HepG2 (cell line): ENCODE measurements at regions of chr11 and their contacts with region 1.

Region 1: DNA sequence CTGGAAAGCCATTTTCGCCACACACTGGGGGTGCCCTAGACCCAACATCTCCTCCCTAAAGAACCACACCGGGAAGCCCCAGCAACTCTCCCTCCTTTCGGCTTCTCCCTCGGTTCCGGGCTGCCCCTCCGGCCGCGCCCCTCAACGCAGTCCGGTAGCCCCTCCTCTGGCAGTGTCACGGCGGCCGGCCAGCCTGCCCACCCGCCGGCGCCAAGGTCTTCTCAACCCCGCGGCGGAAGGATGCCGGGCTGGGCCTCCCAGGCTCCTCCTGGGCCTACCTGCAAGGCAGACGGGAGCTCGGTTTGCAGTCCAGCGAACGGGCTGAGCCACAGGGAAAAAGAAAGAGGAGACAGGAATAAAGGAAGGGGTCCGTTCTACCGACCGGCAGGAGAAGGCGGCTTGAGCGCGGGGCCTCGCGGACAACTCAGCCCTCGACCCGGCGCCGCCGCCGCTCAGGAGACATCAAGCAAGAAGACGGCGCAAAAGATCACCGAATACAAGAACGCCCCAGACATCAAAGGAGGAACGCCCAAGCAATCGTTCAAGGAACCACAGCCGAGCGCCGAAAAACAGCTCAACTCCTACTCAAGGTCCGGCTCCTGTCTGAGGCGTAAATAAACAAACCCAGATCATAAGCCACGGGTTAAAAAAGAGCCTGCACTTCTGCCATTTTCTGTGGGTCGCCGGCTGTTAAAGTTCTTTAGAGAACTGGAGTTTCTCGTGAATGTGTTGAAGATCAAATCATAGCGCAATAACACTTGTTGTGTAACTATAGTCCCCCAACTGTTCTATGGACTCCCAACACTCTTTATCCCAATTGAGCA is at the start of gene AMBRA1:
- DNase-seq: peak; percentile 95
- ATAC-seq: peak; percentile 74
- H3K4me3 ChIP-seq: peak within 1 kb of the TSS; percentile 73 to 97 (median 87)
- H3K27ac ChIP-seq: peak within 1 kb of the TSS; percentile 97
- H3K4me1 ChIP-seq: peaks cover 64% of the 10 kb centered on the region
- H3K27me3 ChIP-seq: peaks cover 0 to 4% of the 10 kb centered on the region in 2 experiments; a peak in 1 of 5 replicates
- CTCF ChIP-seq: 0 out of 2 replicates have a peak, but pooled peaks have one; percentile 2
- EP300 ChIP-seq: peak; percentile 26 to 49; a peak in 1 of 4 replicates
- POLR2A ChIP-seq: peak; percentile 62 to 71; a peak in 3 of 4 replicates
- RAD21 ChIP-seq: peak; percentile 29; the same call in 1 of the 2 replicates
- total RNA-seq, gene AMBRA1: 26.0 and 26.1 TPM in 2 replicates

Region 2: GRCh38 chr11:46554205-46555055 is 39.3 kb before region 1 on chr11:
- CTCF ChIA-PET with region 1: no interaction called
- POLR2A ChIA-PET with region 1: interaction called, 20 read pairs
- in situ Hi-C with region 1: no loop called
- intact Hi-C with region 1: loop called (anchors 1 kb)
- DNase-seq: peak; percentile 99
- ATAC-seq: peak; percentile 83
- H3K4me3 ChIP-seq: peak overlapping the region in 1 of 3 experiments; percentile 34; a peak in 1 of 6 replicates
- H3K27ac ChIP-seq: peak overlapping the region; percentile 91
- H3K4me1 ChIP-seq: peaks cover 65% of the 10 kb centered on the region
- H3K27me3 ChIP-seq: no peaks in the 10 kb centered on the region
- CTCF ChIP-seq: no peak
- EP300 ChIP-seq: peak; percentile 85 to 98; a peak in 3 of 4 replicates
- POLR2A ChIP-seq: no peak
- RAD21 ChIP-seq: no peak

Region 3: DNA sequence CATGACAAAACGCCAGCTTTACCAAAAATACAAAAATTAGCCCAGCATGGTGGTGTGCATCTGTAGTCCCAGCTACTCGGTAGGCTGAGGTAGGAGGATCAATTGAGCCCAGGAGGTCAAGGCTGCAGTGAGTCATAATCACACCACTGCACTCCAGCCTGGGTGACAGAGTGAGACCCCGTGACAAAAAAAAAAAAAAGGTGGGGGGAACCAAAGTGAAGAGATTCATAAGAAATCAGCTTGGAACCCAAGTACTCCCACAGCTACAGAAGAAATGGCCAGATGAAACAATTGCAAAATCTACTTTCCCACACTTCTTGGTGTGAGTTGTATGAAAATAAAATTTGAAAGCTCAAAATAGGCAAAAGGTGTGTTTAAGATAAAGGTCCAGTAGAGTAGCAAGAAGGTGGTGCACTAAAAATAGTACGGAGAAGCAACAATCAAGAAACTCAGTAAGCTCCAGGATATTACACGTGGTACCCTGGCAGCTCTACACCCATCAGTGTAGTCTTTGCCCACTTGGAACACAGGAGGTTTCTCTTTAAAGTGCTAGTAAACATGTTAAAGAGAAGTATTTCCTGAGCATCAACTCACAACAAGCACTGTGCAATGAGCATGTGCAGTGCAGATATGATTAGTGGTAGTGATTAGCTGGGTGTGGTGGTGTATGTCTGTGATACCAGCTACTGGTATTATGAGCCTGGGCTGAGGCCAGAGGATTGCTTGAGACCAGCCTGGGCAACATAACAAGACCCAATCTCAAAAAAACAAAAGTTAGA is 18.0 kb after region 1 on chr11:
- CTCF ChIA-PET with region 1: no interaction called
- POLR2A ChIA-PET with region 1: interaction called, 13 read pairs
- in situ Hi-C with region 1: no loop called
- intact Hi-C with region 1: loop called (anchors 2 kb)
- DNase-seq: peak; percentile 51
- ATAC-seq: peak; percentile 72
- H3K4me3 ChIP-seq: no peak overlapping the region
- H3K27ac ChIP-seq: peak overlapping the region; percentile 72
- H3K4me1 ChIP-seq: peaks cover 45% of the 10 kb centered on the region
- H3K27me3 ChIP-seq: no peaks in the 10 kb centered on the region
- CTCF ChIP-seq: no peak
- EP300 ChIP-seq: no peak; a peak in 1 of 4 replicates
- POLR2A ChIP-seq: no peak
- RAD21 ChIP-seq: no peak

Region 4: DNA sequence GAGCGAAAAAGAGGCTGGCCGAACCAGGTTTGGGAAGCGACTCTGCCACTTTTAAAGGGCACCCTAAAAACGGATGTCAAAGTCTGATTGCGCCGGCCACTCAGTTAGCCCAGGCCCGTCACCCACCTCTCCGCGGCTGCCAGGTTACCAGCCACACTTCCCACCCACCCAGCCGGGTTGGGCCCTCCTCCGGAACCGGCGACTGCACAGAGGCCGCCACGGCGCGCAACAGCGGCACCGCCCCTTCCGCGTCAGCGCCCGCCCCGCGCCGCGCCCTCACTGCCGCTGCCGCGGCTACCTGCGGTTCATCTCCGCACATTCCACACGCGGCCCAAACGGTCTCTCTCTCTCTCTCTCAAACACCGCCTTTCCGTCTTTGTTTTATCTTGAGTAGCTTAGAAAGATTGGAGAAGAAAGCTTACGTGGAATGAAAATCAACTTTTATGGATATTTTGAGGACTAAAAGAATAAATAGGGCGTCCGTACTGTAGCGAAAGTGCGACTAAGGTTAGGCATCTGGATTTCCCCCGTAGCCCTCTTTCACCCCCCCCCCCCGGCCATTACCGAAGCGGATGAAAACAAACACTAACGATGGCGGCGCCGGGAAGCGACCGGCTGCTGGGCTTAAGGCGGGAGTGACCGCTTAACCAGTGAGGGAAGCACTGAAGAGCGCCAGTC is 23.4 kb after region 1 on chr11 and contains the starts of genes ATG13 and HARBI1:
- CTCF ChIA-PET with region 1: no interaction called
- POLR2A ChIA-PET with region 1: interaction called, 13 read pairs
- in situ Hi-C with region 1: no loop called
- intact Hi-C with region 1: loop called (anchors 2 kb)
- DNase-seq: peak; percentile 77
- ATAC-seq: peak; percentile 97
- H3K4me3 ChIP-seq: peak within 1 kb of the TSS; percentile 99 to 100 (median 100)
- H3K27ac ChIP-seq: peak within 1 kb of the TSS; percentile 98
- H3K4me1 ChIP-seq: peaks cover 53% of the 10 kb centered on the region
- H3K27me3 ChIP-seq: no peaks in the 10 kb centered on the region; a peak in 1 of 5 replicates
- CTCF ChIP-seq: no peak
- EP300 ChIP-seq: peak in 1 of 2 experiments; percentile 45; a peak in 1 of 4 replicates
- POLR2A ChIP-seq: peak; percentile 60 to 87
- RAD21 ChIP-seq: 0 out of 2 replicates have a peak, but pooled peaks have one; percentile 12
- total RNA-seq, gene ATG13: 55.0 and 61.8 TPM in 2 replicates
- total RNA-seq, gene HARBI1: 4.8 and 6.9 TPM in 2 replicates